PC-9 (cell line): ENCODE measurements at regions of chr21 and their contacts with region 1.

Region 1: GRCh38 chr21:35940074-35940927 is 120.0 kb downstream of the SETD4 start:
- DNase-seq: peak in 1 of 2 experiments; percentile 25
- H3K4me3 ChIP-seq: no peak overlapping the region
- H3K27ac ChIP-seq: no peak overlapping the region
- H3K4me1 ChIP-seq: no peaks in the 10 kb centered on the region
- H3K27me3 ChIP-seq: no peaks in the 10 kb centered on the region
- CTCF ChIP-seq: peak; percentile 63

Region 2: GRCh38 chr21:34693192-34693810 is 1247.0 kb before region 1 on chr21:
- CTCF ChIA-PET with region 1: interaction called, 3 read pairs
- POLR2A ChIA-PET with region 1: interaction called, 4 read pairs
- intact Hi-C with region 1: loop called (anchors 5 kb)
- DNase-seq: peak; percentile 39
- H3K4me3 ChIP-seq: no peak overlapping the region
- H3K27ac ChIP-seq: 0 out of 2 replicates have a peak overlapping the region, but pooled peaks have one; percentile 89
- H3K4me1 ChIP-seq: peaks cover 38% of the 10 kb centered on the region
- H3K27me3 ChIP-seq: no peaks in the 10 kb centered on the region
- CTCF ChIP-seq: peak; percentile 86

Region 3: DNA sequence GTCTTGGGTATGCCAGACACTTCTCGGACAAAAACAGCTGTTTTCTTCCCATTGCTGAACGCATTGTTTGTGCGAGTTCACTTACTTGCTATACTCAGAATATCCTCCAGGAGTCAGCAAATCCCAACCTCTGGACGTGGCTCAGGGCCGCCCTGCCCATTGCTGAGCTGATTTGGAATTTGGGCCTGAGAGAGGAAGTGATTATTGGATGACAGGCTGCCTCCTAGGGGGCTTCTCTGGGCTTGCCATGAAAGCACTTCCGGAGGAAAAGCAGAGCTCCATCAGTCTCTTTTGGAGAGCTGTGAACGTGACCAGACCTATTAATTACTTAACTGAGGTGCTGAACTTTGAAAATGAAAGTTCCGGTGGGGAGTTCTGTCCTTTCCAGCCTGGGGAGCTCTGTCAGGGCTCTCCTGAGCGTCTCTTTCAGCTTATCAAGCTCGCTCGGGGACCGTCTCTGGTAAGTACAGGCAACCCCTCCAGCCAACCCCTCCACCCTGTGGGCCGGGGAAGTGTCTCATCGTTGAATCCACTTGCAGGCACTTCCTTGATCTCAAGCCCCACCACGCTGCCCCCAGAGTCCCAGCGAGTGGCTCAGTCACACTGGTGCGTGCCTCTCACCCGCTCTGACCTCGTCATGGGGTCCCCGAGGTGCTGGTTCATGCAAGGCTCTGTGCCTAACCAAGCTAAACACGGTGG is 1194.6 kb before region 1 on chr21:
- CTCF ChIA-PET with region 1: no interaction called
- POLR2A ChIA-PET with region 1: no interaction called
- intact Hi-C with region 1: loop called (anchors 1 kb)
- DNase-seq: peak; percentile 56
- H3K4me3 ChIP-seq: no peak overlapping the region
- H3K27ac ChIP-seq: no peak overlapping the region
- H3K4me1 ChIP-seq: peaks cover 12% of the 10 kb centered on the region
- H3K27me3 ChIP-seq: no peaks in the 10 kb centered on the region
- CTCF ChIP-seq: peak; percentile 86

Region 4: GRCh38 chr21:35995522-35996088 is 55.3 kb after region 1 on chr21:
- CTCF ChIA-PET with region 1: no interaction called
- POLR2A ChIA-PET with region 1: no interaction called
- intact Hi-C with region 1: no loop called
- DNase-seq: no peak
- H3K4me3 ChIP-seq: no peak overlapping the region
- H3K27ac ChIP-seq: no peak overlapping the region
- H3K4me1 ChIP-seq: no peaks in the 10 kb centered on the region
- H3K27me3 ChIP-seq: peaks cover 27% of the 10 kb centered on the region; the same call in 1 of the 2 replicates
- CTCF ChIP-seq: no peak

Region 5: GRCh38 chr21:36028127-36029069 is 88.1 kb after region 1 on chr21:
- CTCF ChIA-PET with region 1: no interaction called
- POLR2A ChIA-PET with region 1: no interaction called
- intact Hi-C with region 1: loop called (anchors 10 kb)
- DNase-seq: peak; percentile 44 to 67
- H3K4me3 ChIP-seq: no peak overlapping the region
- H3K27ac ChIP-seq: no peak overlapping the region
- H3K4me1 ChIP-seq: no peaks in the 10 kb centered on the region
- H3K27me3 ChIP-seq: no peaks in the 10 kb centered on the region
- CTCF ChIP-seq: peak; percentile 83